Heart left ventricle (tissue), 16 donors: ENCODE measurements at regions of chr1 and their contacts with region 1.

Region 1: GRCh38 chr1:169809370-169810095 is 14.8 kb upstream of the METTL18 start:
- DNase-seq: no peak
- ATAC-seq: peak in 1 of 4 donors; percentile 22
- H3K4me3 ChIP-seq: no peak overlapping the region
- H3K27ac ChIP-seq: no peak overlapping the region
- H3K4me1 ChIP-seq: no peaks in the 10 kb centered on the region
- H3K27me3 ChIP-seq: no peaks in the 10 kb centered on the region
- CTCF ChIP-seq: peak; percentile 44 to 75 (median 60)
- POLR2A ChIP-seq: no peak

Region 2: GRCh38 chr1:169466259-169467230 is 343.0 kb before region 1 on chr1:
- intact Hi-C with region 1: loop called in 1 of 10 experiments (anchors 10 kb)
- DNase-seq: no peak
- ATAC-seq: peak in 2 of 4 donors; percentile 32 to 35
- H3K4me3 ChIP-seq: no peak overlapping the region
- H3K27ac ChIP-seq: no peak overlapping the region
- H3K4me1 ChIP-seq: peaks cover 0 to 4% (median 0%) of the 10 kb centered on the region in 12 donors
- H3K27me3 ChIP-seq: no peaks in the 10 kb centered on the region
- CTCF ChIP-seq: peak in 10 of 12 donors; percentile 7 to 55 (median 42)
- POLR2A ChIP-seq: no peak

Region 3: DNA sequence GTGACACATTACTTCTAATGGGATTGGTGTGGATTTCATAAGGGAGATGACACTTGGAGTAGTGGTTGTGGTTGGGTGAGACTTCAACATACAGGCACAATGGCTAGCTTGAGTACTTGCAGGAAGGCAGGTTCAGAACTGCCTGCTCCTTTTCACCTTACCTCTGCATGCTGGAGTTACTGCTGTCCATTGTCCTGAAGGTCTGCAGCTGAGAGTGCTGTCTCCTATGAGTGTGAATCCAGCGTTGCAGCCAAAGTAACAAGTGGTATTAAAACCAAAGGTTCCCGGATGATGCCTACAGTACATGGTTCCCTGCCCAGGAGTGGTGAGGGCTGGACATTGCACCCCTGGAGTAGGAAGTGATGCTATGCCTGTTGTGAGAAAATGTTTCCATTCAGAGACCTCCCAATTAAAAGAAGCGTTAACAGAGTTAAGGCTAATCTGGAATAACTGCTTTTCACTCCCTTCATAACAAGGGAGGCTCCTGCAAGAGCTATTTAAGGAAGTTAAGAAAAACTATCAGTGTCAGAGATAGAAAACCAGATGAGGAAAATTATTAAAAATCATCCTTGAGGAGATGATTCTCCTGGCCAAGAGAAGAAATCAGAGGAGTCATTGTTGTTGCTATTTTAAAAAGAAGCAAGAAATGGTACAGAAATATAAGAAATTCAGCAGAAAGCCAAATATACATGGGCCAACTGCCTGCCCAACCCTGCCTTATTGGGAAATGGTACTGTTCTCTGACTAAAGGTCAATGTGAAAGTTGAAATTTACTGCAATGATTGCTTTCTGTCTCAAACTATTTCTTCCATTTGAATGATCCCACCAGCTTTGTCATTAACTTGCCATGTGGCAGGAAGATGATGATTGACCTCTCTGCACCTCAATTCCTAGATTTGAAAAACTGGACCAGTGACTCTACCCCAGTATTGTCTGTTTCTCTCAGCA is 213.5 kb before region 1 on chr1:
- intact Hi-C with region 1: loop called (anchors 1 to 5 kb)
- DNase-seq: no peak
- ATAC-seq: peak in 2 of 4 donors; percentile 24 to 56
- H3K4me3 ChIP-seq: no peak overlapping the region
- H3K27ac ChIP-seq: no peak overlapping the region
- H3K4me1 ChIP-seq: no peaks in the 10 kb centered on the region
- H3K27me3 ChIP-seq: peaks cover 0 to 8% (median 0%) of the 10 kb centered on the region in 9 donors
- CTCF ChIP-seq: no peak
- POLR2A ChIP-seq: no peak

Region 4: DNA sequence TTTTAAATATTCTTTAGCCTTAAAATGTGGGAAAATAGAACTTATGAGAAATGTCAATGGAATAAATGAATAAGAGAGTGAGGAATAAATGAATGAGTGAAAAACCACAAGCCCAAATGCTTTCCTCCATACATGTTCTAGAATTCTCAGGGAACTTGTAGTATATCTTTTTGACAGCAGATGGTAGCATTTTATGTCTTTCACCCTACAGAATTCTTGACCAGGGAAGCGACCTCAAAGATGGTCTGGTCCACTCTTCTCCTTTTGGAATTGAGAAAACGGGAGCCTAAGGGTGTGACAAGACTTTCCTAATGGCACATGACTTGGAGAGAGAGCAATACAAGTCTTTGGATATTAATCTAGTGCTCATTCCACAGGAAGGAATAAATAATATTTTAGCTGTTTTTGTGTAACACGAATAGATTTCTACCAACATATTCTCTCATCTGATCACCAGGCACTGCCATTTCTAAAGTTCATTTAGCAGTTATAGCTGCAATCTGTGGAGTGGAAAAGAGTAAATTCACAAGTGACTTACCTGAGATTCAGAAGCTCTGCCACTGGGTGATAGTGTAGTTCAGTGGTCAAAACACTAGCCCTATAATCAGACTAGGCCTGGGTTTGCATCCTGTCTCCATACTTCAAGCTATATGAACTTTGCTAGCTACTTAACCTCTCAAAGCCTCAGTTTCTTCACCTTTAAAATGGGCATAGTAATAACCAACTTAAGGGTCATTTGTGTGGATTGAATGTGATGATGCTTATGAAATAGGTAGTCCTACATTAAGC is 208.2 kb before region 1 on chr1:
- intact Hi-C with region 1: loop called (anchors 1 to 5 kb)
- DNase-seq: no peak
- ATAC-seq: peak in 1 of 4 donors; percentile 54
- H3K4me3 ChIP-seq: no peak overlapping the region
- H3K27ac ChIP-seq: no peak overlapping the region
- H3K4me1 ChIP-seq: peaks cover 0 to 22% (median 0%) of the 10 kb centered on the region in 12 donors
- H3K27me3 ChIP-seq: peaks cover 0 to 8% (median 0%) of the 10 kb centered on the region in 9 donors
- CTCF ChIP-seq: peak; percentile 29 to 60 (median 47)
- POLR2A ChIP-seq: no peak

Region 5: DNA sequence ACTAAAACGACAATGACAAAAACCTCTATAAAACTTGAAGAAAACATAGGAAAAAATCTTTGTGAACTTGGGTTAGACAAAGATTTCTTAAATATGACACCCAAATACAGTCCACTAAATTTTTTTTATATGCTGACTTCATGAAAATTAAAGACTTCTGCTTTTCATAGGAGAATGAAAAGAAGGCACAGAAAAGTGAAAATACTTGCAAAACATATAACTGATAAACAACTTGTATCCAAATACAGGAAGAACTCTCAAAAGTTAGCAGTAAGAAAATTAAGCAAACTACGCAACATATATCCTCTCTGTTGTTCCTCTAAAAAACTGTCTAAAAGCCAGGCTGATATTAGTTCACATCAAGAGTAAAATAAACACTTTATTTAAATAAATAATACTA is 211.3 kb after region 1 on chr1:
- intact Hi-C with region 1: no loop called
- DNase-seq: no peak
- ATAC-seq: no peak
- H3K4me3 ChIP-seq: no peak overlapping the region
- H3K27ac ChIP-seq: peak overlapping the region in 1 of 12 donors; percentile 39
- H3K4me1 ChIP-seq: peaks cover 0 to 4% (median 0%) of the 10 kb centered on the region in 12 donors
- H3K27me3 ChIP-seq: no peaks in the 10 kb centered on the region
- CTCF ChIP-seq: no peak
- POLR2A ChIP-seq: no peak

Region 6: GRCh38 chr1:170032531-170033280 is 223.2 kb after region 1 on chr1:
- intact Hi-C with region 1: no loop called
- DNase-seq: no peak
- ATAC-seq: no peak
- H3K4me3 ChIP-seq: no peak overlapping the region
- H3K27ac ChIP-seq: no peak overlapping the region
- H3K4me1 ChIP-seq: no peaks in the 10 kb centered on the region
- H3K27me3 ChIP-seq: no peaks in the 10 kb centered on the region
- CTCF ChIP-seq: no peak
- POLR2A ChIP-seq: no peak